ENCODE measurements at regions of chr9 and their contacts with region 1.

Region 1: GRCh38 chr9:124202447-124202971 is 55.2 kb upstream of the NEK6 start:
- DNase-seq: peak in 4 of 9 donors; percentile 5 to 85 (median 22)
- ATAC-seq: peak; percentile 96
- H3K4me3 ChIP-seq: no peak overlapping the region
- H3K4me3 Mint-ChIP-seq: peak overlapping the region in 9 of 10 donors; percentile 23 to 81 (median 42)
- H3K27ac ChIP-seq: no peak overlapping the region
- H3K27ac Mint-ChIP-seq: peak overlapping the region; percentile 12 to 93 (median 57)
- H3K4me1 ChIP-seq: peaks cover 13 to 36% of the 10 kb centered on the region in 2 donors
- H3K4me1 Mint-ChIP-seq: peaks cover 6 to 70% (median 24%) of the 10 kb centered on the region in 7 donors
- H3K27me3 ChIP-seq: no peaks in the 10 kb centered on the region
- H3K27me3 Mint-ChIP-seq: no peaks in the 10 kb centered on the region

Region 2: GRCh38 chr9:124164811-124165210 is 37.7 kb before region 1 on chr9:
- CTCF ChIA-PET with region 1: no interaction called
- POLR2A ChIA-PET with region 1: no interaction called
- intact Hi-C with region 1: no loop called
- DNase-seq: no peak
- ATAC-seq: no peak
- H3K4me3 ChIP-seq: no peak overlapping the region
- H3K4me3 Mint-ChIP-seq: no peak overlapping the region
- H3K27ac ChIP-seq: no peak overlapping the region
- H3K27ac Mint-ChIP-seq: no peak overlapping the region
- H3K4me1 ChIP-seq: no peaks in the 10 kb centered on the region
- H3K4me1 Mint-ChIP-seq: no peaks in the 10 kb centered on the region
- H3K27me3 ChIP-seq: no peaks in the 10 kb centered on the region
- H3K27me3 Mint-ChIP-seq: peaks cover 0 to 59% (median 19%) of the 10 kb centered on the region in 5 donors

Region 3: DNA sequence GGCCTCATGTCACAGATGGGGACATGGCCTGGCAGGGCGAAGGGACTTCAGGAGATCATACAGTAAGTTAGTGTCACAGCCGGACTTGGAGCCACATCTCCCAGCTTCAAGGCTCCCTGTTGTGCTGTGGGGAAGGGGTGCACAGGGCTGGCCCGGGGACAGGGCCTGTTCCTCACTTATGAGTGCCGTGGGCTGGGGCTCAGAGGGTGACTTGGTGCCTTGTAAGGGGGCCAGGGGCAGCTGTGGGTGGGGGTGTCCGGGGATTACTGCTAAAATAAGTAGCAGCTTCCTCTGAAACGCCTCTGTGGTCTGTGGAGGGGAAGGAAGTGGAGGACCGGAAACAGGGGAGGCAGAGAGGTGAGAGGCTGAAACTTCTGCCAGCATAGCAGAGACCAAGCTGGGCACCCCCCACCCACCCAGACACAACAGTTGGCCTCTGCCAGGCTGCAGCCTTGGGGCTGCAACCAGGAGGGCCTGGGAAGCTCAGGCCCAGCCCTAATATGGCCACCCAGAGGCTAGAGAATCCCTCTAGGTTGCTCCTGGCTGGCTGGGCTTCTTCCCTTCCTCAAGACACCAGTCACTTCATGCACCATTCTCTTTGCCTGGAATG is 14.2 kb after region 1 on chr9:
- CTCF ChIA-PET with region 1: no interaction called
- POLR2A ChIA-PET with region 1: no interaction called
- intact Hi-C with region 1: loop called in 1 of 2 experiments (anchors 1 kb)
- DNase-seq: peak in 2 of 9 donors; percentile 10 to 67
- ATAC-seq: peak; percentile 56
- H3K4me3 ChIP-seq: peak overlapping the region; percentile 1
- H3K4me3 Mint-ChIP-seq: peak overlapping the region; percentile 33 to 78 (median 60)
- H3K27ac ChIP-seq: no peak overlapping the region
- H3K27ac Mint-ChIP-seq: peak overlapping the region in 8 of 9 donors; percentile 1 to 75 (median 38)
- H3K4me1 ChIP-seq: peaks cover 16 to 58% of the 10 kb centered on the region in 2 donors
- H3K4me1 Mint-ChIP-seq: peaks cover 13 to 75% (median 38%) of the 10 kb centered on the region in 7 donors
- H3K27me3 ChIP-seq: no peaks in the 10 kb centered on the region
- H3K27me3 Mint-ChIP-seq: peaks cover 0 to 3% (median 0%) of the 10 kb centered on the region in 5 donors

Region 4: GRCh38 chr9:124257844-124258606 is 55.5 kb after region 1 on chr9 and contains the start of gene NEK6:
- CTCF ChIA-PET with region 1: no interaction called
- POLR2A ChIA-PET with region 1: no interaction called
- intact Hi-C with region 1: loop called in 1 of 2 experiments (anchors 5 kb)
- DNase-seq: peak in 3 of 9 donors; percentile 11 to 63 (median 39)
- ATAC-seq: peak; percentile 73
- H3K4me3 ChIP-seq: peak within 1 kb of the TSS; percentile 51
- H3K4me3 Mint-ChIP-seq: peak within 1 kb of the TSS; percentile 74 to 98 (median 87)
- H3K27ac ChIP-seq: no peak within 1 kb of the TSS
- H3K27ac Mint-ChIP-seq: peak within 1 kb of the TSS in 5 of 9 donors; percentile 8 to 76 (median 64)
- H3K4me1 ChIP-seq: peaks cover 4 to 12% of the 10 kb centered on the region in 2 donors
- H3K4me1 Mint-ChIP-seq: peaks cover 9 to 46% (median 16%) of the 10 kb centered on the region in 7 donors
- H3K27me3 ChIP-seq: no peaks in the 10 kb centered on the region
- H3K27me3 Mint-ChIP-seq: peaks cover 15 to 50% (median 42%) of the 10 kb centered on the region in 5 donors
- total RNA-seq, gene NEK6: 1.9 to 32.8 (median 2.8) TPM

Measured in naive thymus-derived CD4-positive, alpha-beta T cell (primary cell).